T-cell (primary cell): ENCODE measurements at regions of chr1 and their contacts with region 1.

Region 1: GRCh38 chr1:175015243-175015642 is 8.0 kb downstream of the MRPS14 start:
- DNase-seq: no peak
- ATAC-seq: no peak
- H3K4me3 ChIP-seq: no peak overlapping the region
- H3K4me3 Mint-ChIP-seq: no peak overlapping the region
- H3K27ac ChIP-seq: no peak overlapping the region
- H3K27ac Mint-ChIP-seq: peak overlapping the region in 1 of 2 donors; percentile 8
- H3K4me1 ChIP-seq: no peaks in the 10 kb centered on the region
- H3K4me1 Mint-ChIP-seq: peaks cover 7 to 15% (median 13%) of the 10 kb centered on the region in 3 donors
- H3K27me3 ChIP-seq: no peaks in the 10 kb centered on the region
- H3K27me3 Mint-ChIP-seq: no peaks in the 10 kb centered on the region

Region 2: DNA sequence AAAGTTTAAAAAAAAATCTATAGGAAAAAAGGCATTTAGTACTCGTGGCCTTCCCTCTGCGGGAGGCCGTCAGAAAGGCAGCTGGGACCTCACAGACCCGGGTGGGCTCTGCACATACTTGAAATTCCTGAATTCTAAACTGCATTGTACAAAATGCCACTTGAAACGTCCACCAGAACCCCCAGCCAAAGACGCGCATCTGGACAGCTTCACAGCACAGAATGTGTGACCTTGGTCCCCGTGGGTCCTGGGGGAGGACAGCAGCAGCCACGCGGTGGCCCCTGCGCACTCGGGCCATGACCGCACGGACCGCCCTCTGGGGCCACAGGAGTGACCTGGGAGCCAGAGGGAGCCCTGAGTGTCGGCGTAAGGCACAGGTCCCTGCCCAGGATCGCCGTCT is 28.6 kb after region 1 on chr1:
- CTCF ChIA-PET with region 1: no interaction called
- POLR2A ChIA-PET with region 1: no interaction called
- DNase-seq: no peak
- ATAC-seq: no peak
- H3K4me3 ChIP-seq: no peak overlapping the region
- H3K4me3 Mint-ChIP-seq: no peak overlapping the region
- H3K27ac ChIP-seq: no peak overlapping the region
- H3K27ac Mint-ChIP-seq: no peak overlapping the region
- H3K4me1 ChIP-seq: no peaks in the 10 kb centered on the region
- H3K4me1 Mint-ChIP-seq: no peaks in the 10 kb centered on the region
- H3K27me3 ChIP-seq: peaks cover 0 to 11% of the 10 kb centered on the region in 2 experiments
- H3K27me3 Mint-ChIP-seq: peaks cover 17 to 30% of the 10 kb centered on the region in 2 donors

Region 3: GRCh38 chr1:175054736-175055135 is 39.5 kb after region 1 on chr1:
- CTCF ChIA-PET with region 1: no interaction called
- POLR2A ChIA-PET with region 1: no interaction called
- DNase-seq: no peak
- ATAC-seq: no peak
- H3K4me3 ChIP-seq: no peak overlapping the region
- H3K4me3 Mint-ChIP-seq: no peak overlapping the region
- H3K27ac ChIP-seq: no peak overlapping the region
- H3K27ac Mint-ChIP-seq: no peak overlapping the region
- H3K4me1 ChIP-seq: no peaks in the 10 kb centered on the region
- H3K4me1 Mint-ChIP-seq: no peaks in the 10 kb centered on the region
- H3K27me3 ChIP-seq: peaks cover 0 to 8% of the 10 kb centered on the region in 2 experiments
- H3K27me3 Mint-ChIP-seq: peaks cover 17 to 37% of the 10 kb centered on the region in 2 donors

Region 4: GRCh38 chr1:175089136-175089718 is 74.0 kb after region 1 on chr1:
- CTCF ChIA-PET with region 1: no interaction called
- POLR2A ChIA-PET with region 1: interaction called in 1 of 2 experiments, 10 read pairs
- DNase-seq: no peak
- ATAC-seq: no peak
- H3K4me3 ChIP-seq: no peak overlapping the region
- H3K4me3 Mint-ChIP-seq: no peak overlapping the region
- H3K27ac ChIP-seq: no peak overlapping the region
- H3K27ac Mint-ChIP-seq: no peak overlapping the region
- H3K4me1 ChIP-seq: no peaks in the 10 kb centered on the region
- H3K4me1 Mint-ChIP-seq: no peaks in the 10 kb centered on the region
- H3K27me3 ChIP-seq: no peaks in the 10 kb centered on the region
- H3K27me3 Mint-ChIP-seq: no peaks in the 10 kb centered on the region